MCF 10A (cell line): ENCODE measurements at regions of chr10 and their contacts with region 1.

Region 1: GRCh38 chr10:93383562-93383981 is 98.6 kb downstream of the MYOF start:
- DNase-seq: peak; percentile 49
- H3K4me3 Mint-ChIP-seq: peak overlapping the region; percentile 45
- H3K27ac Mint-ChIP-seq: peak overlapping the region; percentile 85
- H3K4me1 Mint-ChIP-seq: peaks cover 41% of the 10 kb centered on the region
- H3K27me3 Mint-ChIP-seq: no peaks in the 10 kb centered on the region
- CTCF ChIP-seq: no peak

Region 2: DNA sequence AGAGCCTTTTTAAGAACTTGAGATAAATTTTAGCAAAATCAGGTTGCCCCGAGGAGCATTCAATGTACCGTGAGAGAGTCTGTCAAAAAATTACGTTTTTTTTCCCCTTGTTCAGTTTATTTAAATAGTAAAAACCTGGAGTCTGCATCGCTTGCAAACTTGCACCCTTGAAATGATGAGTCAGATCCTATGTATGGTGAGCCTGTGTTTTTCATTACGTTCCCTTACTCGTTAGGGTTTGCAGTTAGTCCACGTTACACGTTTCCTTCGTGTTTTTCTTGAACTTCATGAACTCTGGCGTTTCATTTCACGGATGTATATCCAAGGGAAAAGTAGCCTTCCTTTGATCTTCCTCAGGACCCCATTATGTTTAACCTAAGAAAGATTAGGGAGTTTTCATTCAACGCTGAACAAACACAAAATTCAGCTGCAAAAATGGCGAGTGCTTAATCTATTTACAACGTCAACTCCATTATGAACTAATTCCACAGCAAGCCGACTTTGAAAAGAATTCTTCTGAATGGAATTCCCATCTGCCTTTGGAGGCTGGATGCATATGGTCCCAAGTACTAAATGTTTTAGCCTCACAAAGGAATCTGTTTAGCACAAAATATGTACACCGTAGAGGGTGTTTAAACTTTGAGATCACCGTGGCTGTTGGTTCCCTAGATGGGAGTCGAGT is 83.8 kb before region 1 on chr10:
- CTCF ChIA-PET with region 1: no interaction called
- POLR2A ChIA-PET with region 1: no interaction called
- intact Hi-C with region 1: no loop called
- DNase-seq: no peak
- H3K4me3 Mint-ChIP-seq: no peak overlapping the region
- H3K27ac Mint-ChIP-seq: no peak overlapping the region
- H3K4me1 Mint-ChIP-seq: no peaks in the 10 kb centered on the region
- H3K27me3 Mint-ChIP-seq: no peaks in the 10 kb centered on the region
- CTCF ChIP-seq: no peak

Region 3: DNA sequence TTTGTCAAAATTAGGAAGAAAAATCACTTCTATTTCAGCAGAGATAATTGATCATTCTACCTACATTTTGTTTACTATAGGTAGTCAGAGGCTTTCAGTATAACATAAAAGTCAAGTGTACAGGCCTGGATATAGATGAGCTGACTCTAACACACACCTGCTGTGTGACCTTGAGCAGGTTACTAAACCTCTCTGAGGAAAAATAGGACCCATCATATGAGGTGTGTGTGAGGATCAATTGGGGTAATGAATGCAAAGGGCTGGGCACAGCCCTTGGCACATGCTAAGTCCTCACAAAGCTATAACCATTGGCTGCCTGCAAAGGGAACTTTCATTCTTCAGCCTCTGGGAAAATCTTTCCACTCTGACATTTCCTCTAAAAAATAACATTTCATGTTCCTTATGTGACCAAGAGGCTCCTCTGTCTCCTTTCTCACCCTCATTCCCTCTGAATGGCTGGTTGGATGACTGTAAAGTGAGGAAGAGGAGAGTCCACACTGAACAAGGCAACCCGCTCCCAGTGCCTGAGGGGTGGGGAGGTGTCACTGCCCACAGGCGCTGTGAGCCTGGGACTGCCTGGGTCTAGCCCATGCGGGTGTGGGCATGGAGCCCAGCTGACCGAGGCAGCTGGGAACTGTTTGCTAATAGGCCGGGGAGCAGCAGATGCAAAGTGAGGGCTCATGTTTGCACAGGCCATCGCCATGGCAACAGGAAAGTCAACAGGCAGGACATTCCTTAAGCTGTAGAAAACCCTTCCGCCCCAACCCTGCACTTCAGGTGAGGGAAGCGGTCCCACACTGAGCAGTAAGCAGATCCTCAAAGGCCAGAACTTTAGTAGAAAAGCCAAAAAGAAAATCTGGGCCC is 61.8 kb after region 1 on chr10:
- CTCF ChIA-PET with region 1: interaction called, 102 read pairs
- POLR2A ChIA-PET with region 1: interaction called, 32 read pairs
- intact Hi-C with region 1: no loop called
- DNase-seq: peak; percentile 99
- H3K4me3 Mint-ChIP-seq: peak overlapping the region; percentile 38
- H3K27ac Mint-ChIP-seq: peak overlapping the region; percentile 99
- H3K4me1 Mint-ChIP-seq: peaks cover 53% of the 10 kb centered on the region
- H3K27me3 Mint-ChIP-seq: no peaks in the 10 kb centered on the region
- CTCF ChIP-seq: no peak

Region 4: DNA sequence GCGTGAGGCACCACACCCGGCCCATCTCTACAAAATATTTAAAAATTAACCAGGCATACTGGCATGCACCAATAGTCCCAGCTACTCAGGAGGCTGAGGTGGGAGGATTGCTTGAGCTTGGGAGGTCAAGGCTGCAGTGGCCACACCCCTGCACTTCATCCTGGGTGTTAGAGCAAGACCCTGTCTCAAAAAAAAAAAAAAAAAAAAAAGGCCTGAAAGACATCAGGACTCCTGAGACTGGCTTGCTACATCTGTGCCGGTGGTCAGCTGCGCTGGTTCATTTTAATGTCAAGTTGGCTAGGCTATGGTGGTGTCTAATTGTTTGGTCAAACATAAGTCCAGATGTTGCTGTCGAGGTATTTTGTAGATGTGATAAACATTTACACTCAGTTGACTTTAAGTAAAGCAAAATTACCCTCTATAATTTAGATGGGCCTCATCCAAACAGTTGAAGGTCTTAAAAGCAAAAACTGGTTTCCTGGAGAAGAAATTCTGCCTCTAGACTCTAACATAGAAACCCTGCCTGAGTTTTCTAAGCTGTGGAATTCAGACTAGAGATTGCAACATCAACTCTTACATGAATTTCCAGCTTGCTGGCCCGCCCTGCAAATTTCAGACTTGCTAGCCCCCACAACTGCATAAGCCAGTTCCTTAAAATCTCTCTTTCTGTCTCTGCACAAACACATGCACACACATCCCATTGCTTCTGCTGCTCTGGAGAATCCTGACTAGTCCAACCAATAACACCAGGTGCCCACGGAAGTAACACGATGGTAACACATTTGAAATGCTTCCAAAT is 80.3 kb after region 1 on chr10:
- CTCF ChIA-PET with region 1: interaction called, 38 read pairs
- POLR2A ChIA-PET with region 1: interaction called, 93 read pairs
- intact Hi-C with region 1: no loop called
- DNase-seq: peak; percentile 66
- H3K4me3 Mint-ChIP-seq: peak overlapping the region; percentile 11
- H3K27ac Mint-ChIP-seq: peak overlapping the region; percentile 95
- H3K4me1 Mint-ChIP-seq: peaks cover 72% of the 10 kb centered on the region
- H3K27me3 Mint-ChIP-seq: no peaks in the 10 kb centered on the region
- CTCF ChIP-seq: no peak

Region 5: DNA sequence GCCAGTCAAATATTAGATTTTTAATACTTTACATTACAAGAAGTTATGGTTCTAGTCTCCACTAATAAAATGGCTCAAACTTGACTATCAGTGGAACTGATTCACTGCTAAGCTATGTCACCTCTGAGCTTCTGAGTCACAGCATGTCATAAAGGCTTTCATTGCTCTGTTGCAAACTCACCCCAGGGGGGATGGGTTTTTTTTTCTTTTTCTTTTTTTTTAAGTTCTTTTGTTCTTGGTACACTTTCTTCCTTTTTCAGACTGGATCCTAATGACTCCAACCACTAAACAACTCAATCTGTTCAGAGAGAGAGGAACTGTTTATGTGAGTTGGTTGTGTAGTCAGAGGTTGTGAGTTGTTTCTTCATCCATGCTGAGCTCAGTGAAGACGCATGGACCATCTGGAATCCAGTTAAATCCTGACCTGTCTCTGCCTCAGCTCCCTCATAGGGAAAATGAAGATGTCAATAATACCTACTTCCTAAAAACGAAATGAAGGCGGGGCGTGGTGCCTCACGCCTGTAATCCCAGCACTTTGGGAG is 87.6 kb after region 1 on chr10:
- CTCF ChIA-PET with region 1: interaction called, 5 read pairs
- POLR2A ChIA-PET with region 1: interaction called, 93 read pairs
- intact Hi-C with region 1: no loop called
- DNase-seq: peak; percentile 87
- H3K4me3 Mint-ChIP-seq: peak overlapping the region; percentile 44
- H3K27ac Mint-ChIP-seq: peak overlapping the region; percentile 85
- H3K4me1 Mint-ChIP-seq: peaks cover 50% of the 10 kb centered on the region
- H3K27me3 Mint-ChIP-seq: no peaks in the 10 kb centered on the region
- CTCF ChIP-seq: no peak